A673 (cell line): ENCODE measurements at regions of chr4 and their contacts with region 1.

Region 1: DNA sequence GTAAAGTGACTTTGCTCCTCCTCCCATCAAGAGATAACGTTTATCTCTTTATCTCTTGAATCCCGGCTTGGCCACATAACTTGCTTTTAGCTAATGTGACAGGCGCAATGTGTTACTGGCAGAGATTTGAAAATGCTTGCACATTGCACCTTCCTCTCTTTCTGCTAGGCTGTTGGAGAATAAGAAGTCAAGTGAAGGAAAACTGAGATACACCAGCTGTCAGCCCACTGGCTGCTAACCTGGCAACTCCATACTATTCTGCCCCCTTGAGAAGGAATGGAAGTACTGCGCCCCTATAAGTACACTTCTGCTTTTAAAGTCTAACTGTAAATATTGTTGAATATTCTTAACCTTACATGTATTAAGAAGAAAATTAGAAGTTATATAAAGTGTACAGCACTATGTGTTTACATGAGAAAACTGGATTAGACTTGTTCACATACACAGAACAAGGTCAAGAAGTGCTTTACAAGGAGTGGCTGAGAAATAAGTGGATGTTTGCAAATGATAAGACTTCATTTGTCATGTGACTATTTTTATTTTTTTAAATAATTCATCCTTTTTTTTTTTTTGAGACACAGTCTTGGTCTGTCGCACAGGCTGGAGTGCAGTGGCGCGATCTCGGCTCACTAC is 424.5 kb upstream of the CTSO start:
- DNase-seq: peak; percentile 81
- H3K4me3 ChIP-seq: no peak overlapping the region
- H3K27ac ChIP-seq: no peak overlapping the region
- H3K4me1 ChIP-seq: peaks cover 7% of the 10 kb centered on the region
- H3K27me3 ChIP-seq: no peaks in the 10 kb centered on the region
- CTCF ChIP-seq: peak; percentile 87

Region 2: DNA sequence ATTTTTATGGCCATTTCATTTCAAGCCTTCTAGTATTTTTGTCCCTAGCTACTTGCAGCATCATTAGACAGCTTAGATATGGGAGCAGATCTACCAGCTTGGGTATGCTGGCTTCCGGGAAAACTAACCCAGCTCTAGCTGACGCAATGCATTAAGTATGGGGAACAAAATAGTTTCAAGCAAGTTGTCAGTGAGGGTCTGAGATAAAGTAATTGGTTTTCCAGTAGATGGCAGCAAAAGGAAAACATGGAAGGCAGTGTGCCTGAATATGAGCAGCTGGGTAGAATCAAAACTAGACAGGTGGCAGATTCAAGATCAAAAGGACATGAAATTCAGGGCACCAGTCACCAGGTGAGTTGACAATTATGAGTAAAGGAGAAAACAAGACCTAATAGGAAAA is 83.6 kb before region 1 on chr4:
- CTCF ChIA-PET with region 1: no interaction called
- POLR2A ChIA-PET with region 1: no interaction called
- intact Hi-C with region 1: loop called (anchors 2 kb)
- DNase-seq: peak; percentile 93
- H3K4me3 ChIP-seq: no peak overlapping the region
- H3K27ac ChIP-seq: peak overlapping the region; percentile 74
- H3K4me1 ChIP-seq: peaks cover 40% of the 10 kb centered on the region
- H3K27me3 ChIP-seq: no peaks in the 10 kb centered on the region
- CTCF ChIP-seq: peak; percentile 74

Region 3: GRCh38 chr4:156884178-156884577 is 506.0 kb after region 1 on chr4:
- CTCF ChIA-PET with region 1: interaction called, 12 read pairs
- POLR2A ChIA-PET with region 1: no interaction called
- intact Hi-C with region 1: no loop called
- DNase-seq: no peak
- H3K4me3 ChIP-seq: no peak overlapping the region
- H3K27ac ChIP-seq: no peak overlapping the region
- H3K4me1 ChIP-seq: no peaks in the 10 kb centered on the region
- H3K27me3 ChIP-seq: no peaks in the 10 kb centered on the region
- CTCF ChIP-seq: no peak